IMR-90 (cell line): ENCODE measurements at regions of chr13 and their contacts with region 1.

Region 1: DNA sequence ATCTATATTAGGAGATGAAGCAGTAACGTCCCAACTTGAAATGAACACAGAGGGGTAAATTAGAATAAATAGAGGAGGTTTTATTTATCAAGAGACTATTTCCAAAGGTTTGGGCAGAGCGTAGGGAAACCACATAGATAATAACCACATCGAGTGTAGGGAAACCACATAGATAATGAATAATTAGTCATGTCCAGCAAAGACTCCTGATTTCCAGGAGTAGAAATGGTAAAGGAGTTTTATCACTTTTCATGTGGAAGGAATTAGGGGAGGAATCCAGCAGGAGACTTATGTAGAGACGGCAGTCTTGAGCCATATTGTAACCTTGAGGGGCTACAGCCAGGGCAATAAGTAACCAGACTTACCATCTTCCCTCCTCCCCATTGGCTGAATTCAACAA is 136.3 kb upstream of the CSNK1A1L start:
- DNase-seq: no peak
- ATAC-seq: no peak
- H3K4me3 ChIP-seq: no peak overlapping the region
- H3K27ac ChIP-seq: no peak overlapping the region
- H3K4me1 ChIP-seq: no peaks in the 10 kb centered on the region
- H3K27me3 ChIP-seq: no peaks in the 10 kb centered on the region
- CTCF ChIP-seq: no peak
- POLR2A ChIP-seq: no peak
- RAD21 ChIP-seq: no peak

Region 2: GRCh38 chr13:37382146-37382545 is 140.4 kb after region 1 on chr13:
- CTCF ChIA-PET with region 1: interaction called, 10 read pairs
- POLR2A ChIA-PET with region 1: no interaction called
- dilution Hi-C with region 1: no loop called
- in situ Hi-C with region 1: no loop called
- intact Hi-C with region 1: no loop called
- DNase-seq: peak; percentile 23
- ATAC-seq: peak; percentile 38; the same call in 1 of the 2 replicates
- H3K4me3 ChIP-seq: no peak overlapping the region
- H3K27ac ChIP-seq: no peak overlapping the region
- H3K4me1 ChIP-seq: peaks cover 5% of the 10 kb centered on the region
- H3K27me3 ChIP-seq: no peaks in the 10 kb centered on the region
- CTCF ChIP-seq: no peak
- POLR2A ChIP-seq: no peak
- RAD21 ChIP-seq: no peak

Region 3: GRCh38 chr13:38283346-38283745 is 1041.6 kb after region 1 on chr13:
- CTCF ChIA-PET with region 1: no interaction called
- POLR2A ChIA-PET with region 1: no interaction called
- dilution Hi-C with region 1: no loop called
- in situ Hi-C with region 1: no loop called
- intact Hi-C with region 1: no loop called
- DNase-seq: no peak
- ATAC-seq: no peak
- H3K4me3 ChIP-seq: no peak overlapping the region
- H3K27ac ChIP-seq: no peak overlapping the region
- H3K4me1 ChIP-seq: no peaks in the 10 kb centered on the region
- H3K27me3 ChIP-seq: no peaks in the 10 kb centered on the region
- CTCF ChIP-seq: no peak
- POLR2A ChIP-seq: no peak
- RAD21 ChIP-seq: no peak